ENCODE measurements at regions of chr7 and their contacts with region 1.

Region 1: DNA sequence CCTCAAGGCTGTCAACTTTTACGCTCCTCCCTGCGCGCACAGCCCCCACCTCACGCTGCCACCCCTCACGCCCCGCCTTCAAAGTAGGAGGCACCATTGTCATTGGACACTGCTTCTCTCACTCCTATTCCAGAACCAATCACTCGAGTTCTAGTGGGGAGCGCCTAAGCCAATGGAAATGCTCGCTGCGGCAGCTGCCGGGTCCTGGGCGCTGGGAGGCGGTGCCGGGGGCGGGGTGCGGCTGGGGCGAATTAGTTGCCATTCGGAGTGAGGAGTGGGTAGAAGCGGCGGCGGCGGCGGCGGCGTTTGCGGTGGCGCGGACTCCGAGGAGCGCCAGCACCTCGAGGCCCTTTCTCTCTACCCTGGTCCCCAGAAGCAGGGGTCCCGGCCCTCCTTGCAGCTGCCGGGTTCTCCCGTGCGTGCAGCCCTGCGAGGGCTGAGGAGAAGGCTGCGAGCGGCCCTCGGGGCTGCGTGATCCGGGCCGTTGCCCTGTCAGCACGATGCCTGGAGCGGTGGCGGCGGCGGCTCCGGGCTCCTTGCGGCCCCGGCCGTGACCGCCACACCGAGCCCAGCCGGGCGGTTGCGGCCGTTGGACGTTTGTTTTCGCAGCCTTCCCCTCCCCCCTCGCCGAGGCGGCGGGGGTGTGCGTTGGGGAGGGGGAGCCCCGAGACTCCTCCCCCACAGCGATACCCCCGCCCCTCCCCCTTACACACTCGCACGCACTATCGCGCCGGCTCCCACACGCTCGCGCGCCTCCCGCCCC is at the start of gene GLCCI1:
- DNase-seq: peak; percentile 96 to 98 (median 96)
- H3K4me3 ChIP-seq: peak within 1 kb of the TSS; percentile 96 to 99
- H3K4me3 Mint-ChIP-seq: peak within 1 kb of the TSS; percentile 92 to 100 (median 98)
- H3K27ac ChIP-seq: peak within 1 kb of the TSS; percentile 79
- H3K27ac Mint-ChIP-seq: peak within 1 kb of the TSS; percentile 66 to 99 (median 96)
- H3K4me1 ChIP-seq: peaks cover 50% of the 10 kb centered on the region
- H3K4me1 Mint-ChIP-seq: peaks cover 18 to 29% (median 18%) of the 10 kb centered on the region in 4 donors
- H3K27me3 ChIP-seq: no peaks in the 10 kb centered on the region
- H3K27me3 Mint-ChIP-seq: no peaks in the 10 kb centered on the region
- total RNA-seq, gene GLCCI1: 46.7 to 49.7 TPM

Region 2: GRCh38 chr7:7566651-7567611 is 401.8 kb before region 1 on chr7 and contains the start of gene MIOS:
- CTCF ChIA-PET with region 1: no interaction called
- POLR2A ChIA-PET with region 1: no interaction called
- intact Hi-C with region 1: loop called (anchors 5 kb)
- DNase-seq: peak; percentile 79 to 85 (median 84)
- H3K4me3 ChIP-seq: peak within 1 kb of the TSS; percentile 33 to 61
- H3K4me3 Mint-ChIP-seq: peak within 1 kb of the TSS in 7 of 8 donors; percentile 76 to 90 (median 82)
- H3K27ac ChIP-seq: peak within 1 kb of the TSS; percentile 84
- H3K27ac Mint-ChIP-seq: peak within 1 kb of the TSS; percentile 72 to 95 (median 88)
- H3K4me1 ChIP-seq: peaks cover 47% of the 10 kb centered on the region
- H3K4me1 Mint-ChIP-seq: peaks cover 31 to 38% (median 34%) of the 10 kb centered on the region in 4 donors
- H3K27me3 ChIP-seq: no peaks in the 10 kb centered on the region
- H3K27me3 Mint-ChIP-seq: no peaks in the 10 kb centered on the region
- total RNA-seq, gene MIOS: 22.9 to 25.1 TPM

Region 3: DNA sequence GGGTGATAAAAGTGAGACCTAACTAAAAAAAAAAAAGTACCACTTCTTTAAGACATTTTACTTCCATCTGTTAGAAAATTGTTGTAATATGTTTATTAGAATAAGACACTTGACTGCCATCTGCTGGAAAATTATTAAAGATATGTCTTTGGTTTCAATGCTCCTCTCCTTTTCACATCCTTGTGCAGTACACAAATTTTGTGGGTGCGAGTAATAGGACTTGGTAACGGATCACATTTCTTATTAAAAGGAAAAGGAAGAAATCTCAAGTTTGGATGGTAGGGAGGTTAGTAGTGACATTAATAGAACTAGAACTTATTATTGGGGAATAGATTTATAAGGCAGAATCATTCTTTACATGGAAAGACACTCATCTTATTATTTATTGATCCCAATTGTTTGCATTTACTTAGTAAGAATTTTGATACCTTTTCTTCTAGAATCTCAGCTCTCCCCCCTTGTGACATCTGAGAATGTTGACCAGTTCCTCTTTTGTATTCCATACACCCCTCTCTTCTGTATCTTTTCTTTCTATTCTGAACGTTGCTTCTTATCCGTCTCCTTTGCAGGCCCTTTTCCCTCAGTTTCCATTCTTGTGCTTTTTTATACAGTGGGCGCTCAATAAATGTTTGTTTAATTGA is 207.3 kb before region 1 on chr7:
- CTCF ChIA-PET with region 1: interaction called, 6 read pairs
- POLR2A ChIA-PET with region 1: interaction called, 19 read pairs
- intact Hi-C with region 1: loop called (anchors 1 kb)
- DNase-seq: peak in 4 of 5 donors; percentile 46 to 56 (median 49)
- H3K4me3 ChIP-seq: peak overlapping the region; percentile 4 to 75
- H3K4me3 Mint-ChIP-seq: peak overlapping the region; percentile 81 to 98 (median 92)
- H3K27ac ChIP-seq: peak overlapping the region; percentile 67
- H3K27ac Mint-ChIP-seq: peak overlapping the region; percentile 89 to 98 (median 95)
- H3K4me1 ChIP-seq: peaks cover 35% of the 10 kb centered on the region
- H3K4me1 Mint-ChIP-seq: peaks cover 35 to 40% (median 39%) of the 10 kb centered on the region in 4 donors
- H3K27me3 ChIP-seq: no peaks in the 10 kb centered on the region
- H3K27me3 Mint-ChIP-seq: no peaks in the 10 kb centered on the region

Region 4: GRCh38 chr7:7911371-7912155 is 57.2 kb before region 1 on chr7:
- CTCF ChIA-PET with region 1: no interaction called
- POLR2A ChIA-PET with region 1: no interaction called
- intact Hi-C with region 1: no loop called
- DNase-seq: no peak
- H3K4me3 ChIP-seq: no peak overlapping the region
- H3K4me3 Mint-ChIP-seq: no peak overlapping the region
- H3K27ac ChIP-seq: no peak overlapping the region
- H3K27ac Mint-ChIP-seq: no peak overlapping the region
- H3K4me1 ChIP-seq: no peaks in the 10 kb centered on the region
- H3K4me1 Mint-ChIP-seq: peaks cover 0 to 2% (median 0%) of the 10 kb centered on the region in 4 donors
- H3K27me3 ChIP-seq: no peaks in the 10 kb centered on the region
- H3K27me3 Mint-ChIP-seq: no peaks in the 10 kb centered on the region

Region 5: DNA sequence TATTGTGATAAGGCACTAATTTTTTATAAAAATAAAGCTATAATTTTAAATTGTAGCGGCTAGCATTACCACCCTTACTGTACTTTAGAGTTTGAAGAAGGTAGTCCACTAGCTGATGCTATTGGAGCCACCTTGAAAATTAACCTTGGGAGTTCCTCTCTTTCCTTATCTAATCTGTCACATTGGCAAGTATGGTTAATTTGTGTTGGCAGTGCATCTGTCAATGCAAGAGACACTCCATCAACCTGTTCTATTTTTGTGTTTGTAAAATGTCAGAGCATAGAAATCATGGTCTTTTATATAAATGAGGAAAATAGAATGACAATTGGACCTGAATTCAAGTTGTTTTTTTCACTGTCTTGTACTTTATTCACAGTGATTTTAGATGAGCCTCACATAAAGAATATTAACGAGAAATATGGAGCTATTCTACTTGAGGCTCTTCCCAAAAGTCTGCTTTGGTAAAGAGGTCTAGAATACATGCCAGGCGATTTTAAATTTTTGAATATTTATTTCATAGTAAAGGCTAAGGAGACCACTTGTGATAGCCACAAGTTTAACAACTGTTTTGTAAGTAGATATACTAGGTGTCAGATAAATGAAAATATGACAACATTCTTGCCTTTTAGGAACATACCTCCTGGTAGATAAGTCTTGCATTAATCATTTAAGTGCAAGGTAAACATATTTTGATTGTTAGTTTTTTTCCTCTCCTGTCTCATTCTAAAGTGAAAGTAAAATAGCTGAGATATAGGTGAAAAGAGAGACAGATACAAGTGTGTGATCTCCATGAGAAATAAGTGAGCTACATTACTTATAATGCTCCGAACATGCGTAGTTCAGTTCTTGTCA is 20.6 kb after region 1 on chr7:
- CTCF ChIA-PET with region 1: interaction called, 7 read pairs
- POLR2A ChIA-PET with region 1: interaction called, 52 read pairs
- intact Hi-C with region 1: loop called (anchors 2 kb)
- DNase-seq: peak in 1 of 5 donors; percentile 15
- H3K4me3 ChIP-seq: peak overlapping the region in 1 of 2 donors; percentile 20
- H3K4me3 Mint-ChIP-seq: peak overlapping the region; percentile 64 to 88 (median 83)
- H3K27ac ChIP-seq: peak overlapping the region; percentile 41
- H3K27ac Mint-ChIP-seq: peak overlapping the region; percentile 20 to 89 (median 78)
- H3K4me1 ChIP-seq: peaks cover 55% of the 10 kb centered on the region
- H3K4me1 Mint-ChIP-seq: peaks cover 43 to 72% (median 60%) of the 10 kb centered on the region in 4 donors
- H3K27me3 ChIP-seq: no peaks in the 10 kb centered on the region
- H3K27me3 Mint-ChIP-seq: no peaks in the 10 kb centered on the region

Region 6: DNA sequence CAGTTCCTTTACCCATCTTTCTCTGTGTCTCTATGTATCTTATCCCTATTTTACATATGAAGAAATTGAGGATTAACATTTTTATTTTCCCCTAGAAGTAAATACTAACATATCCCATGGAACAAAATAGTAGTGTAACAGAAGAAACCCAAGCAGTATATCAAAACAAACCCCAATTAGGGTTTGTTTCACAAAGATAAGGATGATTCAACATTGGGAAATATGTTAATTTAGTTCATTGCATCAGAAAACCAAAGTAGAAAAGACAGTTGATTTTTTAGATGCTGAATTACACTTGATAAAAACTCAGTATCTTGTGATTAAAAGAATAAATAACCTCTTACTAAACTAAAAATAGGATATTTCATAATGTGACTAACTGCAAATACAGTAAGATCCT is 87.7 kb after region 1 on chr7:
- CTCF ChIA-PET with region 1: no interaction called
- POLR2A ChIA-PET with region 1: no interaction called
- intact Hi-C with region 1: no loop called
- DNase-seq: no peak
- H3K4me3 ChIP-seq: no peak overlapping the region
- H3K4me3 Mint-ChIP-seq: peak overlapping the region in 1 of 8 donors; percentile 12
- H3K27ac ChIP-seq: no peak overlapping the region
- H3K27ac Mint-ChIP-seq: peak overlapping the region in 1 of 7 donors; percentile 43
- H3K4me1 ChIP-seq: peaks cover 2% of the 10 kb centered on the region
- H3K4me1 Mint-ChIP-seq: peaks cover 5 to 14% (median 12%) of the 10 kb centered on the region in 4 donors
- H3K27me3 ChIP-seq: no peaks in the 10 kb centered on the region
- H3K27me3 Mint-ChIP-seq: no peaks in the 10 kb centered on the region

Region 7: GRCh38 chr7:8125680-8126444 is 157.1 kb after region 1 on chr7:
- CTCF ChIA-PET with region 1: interaction called, 9 read pairs
- POLR2A ChIA-PET with region 1: interaction called, 102 read pairs
- intact Hi-C with region 1: no loop called
- DNase-seq: peak; percentile 80 to 92 (median 84)
- H3K4me3 ChIP-seq: peak overlapping the region in 1 of 2 donors; percentile 12
- H3K4me3 Mint-ChIP-seq: peak overlapping the region; percentile 46 to 89 (median 78)
- H3K27ac ChIP-seq: peak overlapping the region; percentile 73
- H3K27ac Mint-ChIP-seq: peak overlapping the region; percentile 93 to 100 (median 98)
- H3K4me1 ChIP-seq: peaks cover 94% of the 10 kb centered on the region
- H3K4me1 Mint-ChIP-seq: peaks cover 62 to 94% (median 79%) of the 10 kb centered on the region in 4 donors
- H3K27me3 ChIP-seq: no peaks in the 10 kb centered on the region
- H3K27me3 Mint-ChIP-seq: no peaks in the 10 kb centered on the region

Region 8: DNA sequence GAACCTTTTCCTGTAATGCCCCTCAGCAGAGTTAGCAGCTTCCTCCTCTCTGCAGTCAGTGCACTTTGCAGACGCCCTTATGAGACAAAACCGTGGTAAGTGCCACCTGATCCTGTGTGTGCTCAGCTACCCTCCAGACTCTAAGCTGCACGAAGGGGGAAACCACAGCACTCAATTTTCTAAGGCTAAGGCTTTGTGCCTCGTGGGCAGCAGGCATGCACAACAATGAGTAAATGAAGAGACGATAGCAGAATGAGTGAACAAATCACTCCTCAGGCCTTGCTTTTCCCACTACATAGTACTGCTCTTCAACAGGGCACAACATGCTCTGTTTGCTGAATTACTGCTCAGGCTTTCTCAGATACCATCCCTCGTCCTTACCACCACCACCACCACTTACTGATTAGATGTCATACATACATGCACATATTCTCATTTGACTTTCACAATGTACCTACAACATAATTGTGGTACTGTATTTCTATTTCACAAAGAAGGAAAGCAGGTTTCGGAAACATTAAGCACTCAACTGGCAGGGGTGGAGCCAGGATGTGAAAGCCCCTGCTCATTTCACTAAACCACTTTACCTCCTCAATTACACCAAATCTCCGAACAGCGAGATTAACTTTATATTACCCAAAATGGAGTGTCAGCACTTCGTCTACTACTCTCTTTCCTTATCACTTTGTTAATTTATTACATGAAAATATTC is 207.8 kb after region 1 on chr7:
- CTCF ChIA-PET with region 1: no interaction called
- POLR2A ChIA-PET with region 1: interaction called, 4 read pairs
- intact Hi-C with region 1: loop called (anchors 1 kb)
- DNase-seq: peak; percentile 64 to 83 (median 69)
- H3K4me3 ChIP-seq: peak overlapping the region in 1 of 2 donors; percentile 34
- H3K4me3 Mint-ChIP-seq: peak overlapping the region; percentile 71 to 87 (median 80)
- H3K27ac ChIP-seq: peak overlapping the region; percentile 69
- H3K27ac Mint-ChIP-seq: peak overlapping the region; percentile 91 to 98 (median 97)
- H3K4me1 ChIP-seq: peaks cover 53% of the 10 kb centered on the region
- H3K4me1 Mint-ChIP-seq: peaks cover 45 to 65% (median 54%) of the 10 kb centered on the region in 4 donors
- H3K27me3 ChIP-seq: no peaks in the 10 kb centered on the region
- H3K27me3 Mint-ChIP-seq: no peaks in the 10 kb centered on the region